Heart right ventricle (tissue), 16 donors: ENCODE measurements at regions of chr2 and their contacts with region 1.

Region 1: GRCh38 chr2:232438951-232439757 is 16.8 kb upstream of the ALPI start:
- DNase-seq: no peak
- ATAC-seq: peak in 7 of 8 donors; percentile 34 to 67 (median 51)
- H3K4me3 ChIP-seq: no peak overlapping the region
- H3K27ac ChIP-seq: no peak overlapping the region
- H3K4me1 ChIP-seq: peaks cover 0 to 11% (median 0%) of the 10 kb centered on the region in 9 donors
- H3K27me3 ChIP-seq: peaks cover 0 to 12% (median 4%) of the 10 kb centered on the region in 7 donors
- CTCF ChIP-seq: peak; percentile 25 to 68 (median 59)

Region 2: DNA sequence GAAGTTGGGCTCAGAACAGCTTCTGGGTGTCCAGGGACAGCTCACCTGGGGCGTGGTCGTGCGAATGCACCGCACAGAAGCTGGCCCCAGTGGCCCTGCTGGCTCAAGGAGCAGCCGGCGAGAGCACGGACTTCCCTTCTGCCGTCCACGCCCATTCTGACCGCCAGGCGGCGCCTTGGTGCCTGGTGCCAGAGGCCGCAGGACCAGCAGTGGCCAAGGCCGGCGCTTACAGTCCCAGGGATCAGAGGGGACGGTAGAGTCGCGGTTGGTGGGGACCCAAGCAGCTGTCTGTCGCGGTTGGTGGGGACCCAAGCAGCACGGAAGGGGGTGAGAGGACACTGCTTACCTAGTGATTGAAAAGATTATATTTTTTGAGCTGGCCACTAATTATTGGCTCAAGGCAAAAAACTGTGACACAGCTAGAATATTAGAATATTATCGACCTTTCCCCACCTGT is 538.6 kb before region 1 on chr2:
- intact Hi-C with region 1: loop called in 5 of 10 experiments (anchors 5 kb)
- DNase-seq: peak; percentile 65 to 79
- ATAC-seq: peak; percentile 49 to 84 (median 69)
- H3K4me3 ChIP-seq: no peak overlapping the region
- H3K27ac ChIP-seq: no peak overlapping the region
- H3K4me1 ChIP-seq: peaks cover 0 to 3% (median 0%) of the 10 kb centered on the region in 9 donors
- H3K27me3 ChIP-seq: peaks cover 0 to 24% (median 4%) of the 10 kb centered on the region in 7 donors
- CTCF ChIP-seq: peak; percentile 36 to 88 (median 74)

Region 3: GRCh38 chr2:231917280-231918066 is 521.7 kb before region 1 on chr2:
- intact Hi-C with region 1: loop called in 1 of 10 experiments (anchors 5 kb)
- DNase-seq: peak in 1 of 2 donors; percentile 38
- ATAC-seq: peak; percentile 34 to 65 (median 48)
- H3K4me3 ChIP-seq: no peak overlapping the region
- H3K27ac ChIP-seq: no peak overlapping the region
- H3K4me1 ChIP-seq: peaks cover 0 to 10% (median 0%) of the 10 kb centered on the region in 9 donors
- H3K27me3 ChIP-seq: peaks cover 0 to 39% (median 15%) of the 10 kb centered on the region in 7 donors
- CTCF ChIP-seq: no peak

Region 4: GRCh38 chr2:232327105-232328041 is 111.8 kb before region 1 on chr2:
- intact Hi-C with region 1: loop called in 2 of 10 experiments (anchors 10 kb)
- DNase-seq: peak; percentile 58 to 71
- ATAC-seq: peak in 7 of 8 donors; percentile 35 to 73 (median 66)
- H3K4me3 ChIP-seq: no peak overlapping the region
- H3K27ac ChIP-seq: no peak overlapping the region
- H3K4me1 ChIP-seq: peaks cover 0 to 11% (median 3%) of the 10 kb centered on the region in 9 donors
- H3K27me3 ChIP-seq: no peaks in the 10 kb centered on the region
- CTCF ChIP-seq: peak; percentile 56 to 84 (median 78)

Region 5: GRCh38 chr2:232339121-232340081 is 99.8 kb before region 1 on chr2:
- intact Hi-C with region 1: loop called in 2 of 10 experiments (anchors 5 to 10 kb)
- DNase-seq: no peak
- ATAC-seq: peak in 2 of 8 donors; percentile 7 to 13
- H3K4me3 ChIP-seq: no peak overlapping the region
- H3K27ac ChIP-seq: no peak overlapping the region
- H3K4me1 ChIP-seq: no peaks in the 10 kb centered on the region
- H3K27me3 ChIP-seq: no peaks in the 10 kb centered on the region
- CTCF ChIP-seq: peak in 1 of 9 donors; percentile 13

Region 6: GRCh38 chr2:232350861-232351514 is 88.2 kb before region 1 on chr2:
- intact Hi-C with region 1: no loop called
- DNase-seq: no peak
- ATAC-seq: no peak
- H3K4me3 ChIP-seq: no peak overlapping the region
- H3K27ac ChIP-seq: no peak overlapping the region
- H3K4me1 ChIP-seq: peaks cover 0 to 15% (median 9%) of the 10 kb centered on the region in 9 donors
- H3K27me3 ChIP-seq: peaks cover 22 to 85% (median 62%) of the 10 kb centered on the region in 7 donors
- CTCF ChIP-seq: no peak

Region 7: DNA sequence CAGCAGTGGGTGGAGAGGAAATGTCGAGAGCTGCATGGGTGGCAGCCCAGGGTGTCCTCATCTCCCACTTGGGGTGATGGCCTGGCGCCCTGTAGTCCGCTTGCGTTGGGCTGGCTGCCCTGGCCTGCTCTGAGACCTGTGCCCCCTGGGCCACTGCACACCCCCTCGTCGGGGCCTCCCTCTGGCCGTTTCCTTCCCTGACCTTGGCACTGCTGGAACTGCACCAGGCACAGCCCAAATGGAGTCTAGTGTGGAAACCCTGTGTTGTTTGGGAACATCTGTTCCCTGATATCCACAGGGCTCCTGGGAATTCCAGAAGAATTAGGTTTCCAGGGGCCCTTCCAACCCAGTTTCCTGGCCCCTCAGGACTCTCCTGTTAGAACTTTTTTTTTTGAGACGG is 208.1 kb after region 1 on chr2:
- intact Hi-C with region 1: no loop called
- DNase-seq: peak in 1 of 2 donors; percentile 28
- ATAC-seq: peak in 4 of 8 donors; percentile 20 to 46 (median 30)
- H3K4me3 ChIP-seq: no peak overlapping the region
- H3K27ac ChIP-seq: no peak overlapping the region
- H3K4me1 ChIP-seq: peaks cover 0 to 13% (median under 1%) of the 10 kb centered on the region in 9 donors
- H3K27me3 ChIP-seq: no peaks in the 10 kb centered on the region
- CTCF ChIP-seq: no peak